IMR-90 (cell line): ENCODE measurements at regions of chr5 and their contacts with region 1.

Region 1: DNA sequence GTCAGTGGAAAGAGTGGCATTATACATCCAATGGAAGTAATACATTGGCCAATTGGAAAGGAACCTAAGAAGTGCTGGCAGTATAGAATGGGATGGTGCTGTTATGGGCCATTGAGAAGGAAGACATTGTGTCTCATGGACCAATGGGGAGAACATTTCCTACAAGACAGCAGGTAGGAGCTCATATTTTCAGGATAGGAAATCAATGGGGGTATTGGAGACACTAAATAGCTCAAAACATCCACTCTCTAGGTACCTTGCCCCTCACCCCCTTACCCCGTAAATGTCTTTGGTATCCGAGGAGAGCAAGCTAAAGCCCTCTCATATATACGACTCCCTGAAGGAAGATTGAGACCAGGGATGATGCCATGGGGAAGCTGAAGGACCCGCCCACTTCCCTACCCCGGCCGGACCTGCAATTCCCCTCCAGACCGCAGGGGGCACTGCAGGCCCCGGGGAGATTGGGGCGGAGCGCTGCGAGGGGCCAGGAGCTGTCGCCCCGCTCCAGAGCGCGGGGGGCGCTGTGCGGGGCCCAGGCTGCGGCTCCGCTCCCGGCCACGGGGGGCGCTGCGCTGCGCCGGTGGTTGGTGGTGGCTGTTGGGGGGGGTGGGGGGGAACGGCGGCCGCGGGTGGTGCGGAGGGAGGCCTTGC is at the start of gene KDM3B:
- DNase-seq: peak; percentile 80
- ATAC-seq: peak; percentile 83
- H3K4me3 ChIP-seq: peak within 1 kb of the TSS; percentile 73
- H3K27ac ChIP-seq: peak within 1 kb of the TSS; percentile 78
- H3K4me1 ChIP-seq: peaks cover 2% of the 10 kb centered on the region; the same call in 1 of the 2 replicates
- H3K27me3 ChIP-seq: no peaks in the 10 kb centered on the region
- CTCF ChIP-seq: peak; percentile 99
- POLR2A ChIP-seq: no peak
- RAD21 ChIP-seq: no peak; the same call in 1 of the 2 replicates
- total RNA-seq, gene KDM3B: 35.8 and 36.7 TPM in 2 replicates

Region 2: DNA sequence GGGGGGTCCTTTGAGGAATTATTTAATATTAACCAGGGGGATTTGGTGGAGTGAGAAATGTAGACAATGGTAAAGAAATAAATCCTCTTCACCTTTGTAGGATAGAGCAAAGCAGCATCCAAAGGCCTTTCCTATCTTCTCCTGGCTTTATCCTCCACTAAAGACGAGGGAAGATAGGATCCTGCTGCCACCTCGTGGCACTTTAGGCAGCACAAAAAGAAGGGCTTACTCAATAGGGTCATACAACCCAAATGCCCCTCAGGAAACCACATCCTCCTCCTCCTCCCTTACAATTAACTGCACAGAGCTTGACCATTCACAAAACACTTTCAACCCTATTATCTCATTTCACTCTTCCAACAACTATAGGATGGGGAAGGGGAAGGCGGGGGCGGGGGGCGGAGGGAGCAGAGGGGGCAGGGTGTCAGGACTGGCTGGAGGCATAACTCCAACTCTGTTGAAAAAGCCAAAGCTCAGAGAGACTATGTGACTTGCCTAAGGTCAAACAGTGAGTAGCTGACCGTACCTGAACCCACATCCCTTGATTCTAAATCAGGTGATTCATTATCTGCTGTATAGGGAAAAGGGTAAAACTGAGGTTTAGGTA is 529.9 kb before region 1 on chr5:
- CTCF ChIA-PET with region 1: no interaction called
- POLR2A ChIA-PET with region 1: interaction called, 16 read pairs
- dilution Hi-C with region 1: no loop called
- in situ Hi-C with region 1: no loop called
- intact Hi-C with region 1: no loop called
- DNase-seq: peak; percentile 18
- ATAC-seq: peak; percentile 57
- H3K4me3 ChIP-seq: no peak overlapping the region
- H3K27ac ChIP-seq: no peak overlapping the region
- H3K4me1 ChIP-seq: no peaks in the 10 kb centered on the region
- H3K27me3 ChIP-seq: peaks cover 6% of the 10 kb centered on the region
- CTCF ChIP-seq: peak; percentile 45
- POLR2A ChIP-seq: no peak
- RAD21 ChIP-seq: peak; percentile 51

Region 3: DNA sequence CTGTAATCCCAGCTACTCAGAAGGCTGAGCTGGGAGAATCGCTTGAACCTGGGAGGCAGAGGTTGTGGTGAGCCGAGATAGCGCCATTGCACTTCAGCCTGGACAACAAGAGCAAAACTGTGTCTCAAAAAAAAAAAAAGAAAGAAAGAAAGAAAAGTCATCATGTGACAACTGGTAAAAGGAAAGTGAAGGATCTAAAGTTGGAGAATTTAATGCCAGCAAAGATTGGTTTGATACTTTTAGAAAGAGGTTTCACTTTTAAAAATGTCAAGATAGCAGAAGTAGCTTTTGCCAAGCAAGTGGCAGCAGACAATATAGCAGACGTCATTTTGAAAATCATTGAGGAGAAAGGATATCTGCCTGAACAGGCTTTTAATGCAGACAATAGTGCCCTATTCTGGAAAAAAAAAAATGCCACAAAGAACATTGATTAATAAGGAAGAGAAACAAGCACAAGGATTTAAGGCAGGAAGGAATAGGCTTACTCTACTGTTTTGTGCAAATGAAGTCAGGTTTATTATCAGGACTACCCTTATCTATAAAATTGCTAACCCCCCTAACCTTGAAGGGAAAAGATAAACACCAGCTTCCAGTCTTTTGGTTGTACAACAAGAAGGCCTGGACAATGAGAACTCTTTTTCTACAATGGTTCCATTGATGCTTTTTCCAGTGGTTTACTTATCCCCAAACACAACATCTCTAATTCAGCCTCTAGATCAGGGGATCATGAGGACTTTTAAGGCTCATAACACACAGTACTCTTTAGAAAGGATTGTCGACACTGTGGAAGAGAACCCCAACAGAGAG is 451.0 kb before region 1 on chr5:
- CTCF ChIA-PET with region 1: no interaction called
- POLR2A ChIA-PET with region 1: no interaction called
- dilution Hi-C with region 1: no loop called
- in situ Hi-C with region 1: no loop called
- intact Hi-C with region 1: no loop called
- DNase-seq: no peak
- ATAC-seq: no peak
- H3K4me3 ChIP-seq: no peak overlapping the region
- H3K27ac ChIP-seq: no peak overlapping the region
- H3K4me1 ChIP-seq: no peaks in the 10 kb centered on the region
- H3K27me3 ChIP-seq: peaks cover 6% of the 10 kb centered on the region
- CTCF ChIP-seq: no peak
- POLR2A ChIP-seq: no peak
- RAD21 ChIP-seq: no peak

Region 4: GRCh38 chr5:138028971-138029365 is 323.2 kb before region 1 on chr5:
- CTCF ChIA-PET with region 1: no interaction called
- POLR2A ChIA-PET with region 1: no interaction called
- dilution Hi-C with region 1: no loop called
- in situ Hi-C with region 1: no loop called
- intact Hi-C with region 1: no loop called
- DNase-seq: no peak
- ATAC-seq: no peak
- H3K4me3 ChIP-seq: no peak overlapping the region
- H3K27ac ChIP-seq: no peak overlapping the region
- H3K4me1 ChIP-seq: peaks cover 4% of the 10 kb centered on the region
- H3K27me3 ChIP-seq: no peaks in the 10 kb centered on the region
- CTCF ChIP-seq: no peak
- POLR2A ChIP-seq: no peak
- RAD21 ChIP-seq: no peak

Region 5: DNA sequence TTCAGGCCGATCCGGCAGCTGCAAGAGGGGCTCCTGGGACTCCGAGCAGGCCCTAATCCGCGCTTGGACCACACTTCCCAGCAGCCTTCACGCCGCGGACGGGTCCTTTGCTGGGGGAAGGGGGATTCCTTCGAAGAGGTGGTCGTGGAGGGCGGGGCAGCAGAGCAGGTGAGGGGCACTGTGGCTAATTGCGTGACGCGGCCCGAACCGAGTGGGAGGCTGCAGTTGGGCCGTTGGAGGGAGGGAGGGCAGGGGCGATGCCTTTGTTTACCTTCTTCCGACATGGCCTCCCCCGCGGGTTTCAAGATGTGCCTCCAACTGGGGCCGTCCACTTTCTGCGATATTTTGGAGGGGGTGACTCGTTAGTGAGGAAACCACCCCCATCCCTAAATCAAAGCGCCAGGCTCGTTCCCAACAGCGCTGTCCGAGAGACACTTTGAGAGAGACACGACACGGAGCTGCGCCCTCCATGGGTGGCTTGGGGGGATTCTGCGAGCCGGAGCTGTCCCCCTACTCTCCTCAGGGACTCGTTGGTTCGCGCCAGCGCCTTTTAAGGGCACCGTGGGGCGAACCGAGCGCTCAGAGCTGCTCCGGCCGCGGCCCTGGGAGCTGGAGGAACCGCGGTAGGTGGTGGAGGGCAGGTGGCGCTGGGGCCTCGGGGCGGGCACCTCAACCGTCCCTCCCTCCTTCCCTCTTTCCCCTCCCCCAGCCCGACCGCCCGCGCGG is 14.3 kb before region 1 on chr5 and contains the start of gene FAM53C:
- CTCF ChIA-PET with region 1: interaction called, 24 read pairs
- POLR2A ChIA-PET with region 1: interaction called, 7 read pairs
- dilution Hi-C with region 1: no loop called
- in situ Hi-C with region 1: no loop called
- intact Hi-C with region 1: no loop called
- DNase-seq: peak; percentile 89
- ATAC-seq: peak; percentile 91
- H3K4me3 ChIP-seq: peak within 1 kb of the TSS; percentile 65
- H3K27ac ChIP-seq: peak within 1 kb of the TSS; percentile 97
- H3K4me1 ChIP-seq: peaks cover 3% of the 10 kb centered on the region
- H3K27me3 ChIP-seq: no peaks in the 10 kb centered on the region
- CTCF ChIP-seq: no peak
- POLR2A ChIP-seq: peak; percentile 100
- RAD21 ChIP-seq: peak; percentile 21
- total RNA-seq, gene FAM53C: 21.5 and 23.1 TPM in 2 replicates